Activated CD8-positive, alpha-beta T cell treated with anti-CD3 and anti-CD28 coated beads for 36 hours (primary cell): ENCODE measurements at regions of chr16 and their contacts with region 1.

Region 1: DNA sequence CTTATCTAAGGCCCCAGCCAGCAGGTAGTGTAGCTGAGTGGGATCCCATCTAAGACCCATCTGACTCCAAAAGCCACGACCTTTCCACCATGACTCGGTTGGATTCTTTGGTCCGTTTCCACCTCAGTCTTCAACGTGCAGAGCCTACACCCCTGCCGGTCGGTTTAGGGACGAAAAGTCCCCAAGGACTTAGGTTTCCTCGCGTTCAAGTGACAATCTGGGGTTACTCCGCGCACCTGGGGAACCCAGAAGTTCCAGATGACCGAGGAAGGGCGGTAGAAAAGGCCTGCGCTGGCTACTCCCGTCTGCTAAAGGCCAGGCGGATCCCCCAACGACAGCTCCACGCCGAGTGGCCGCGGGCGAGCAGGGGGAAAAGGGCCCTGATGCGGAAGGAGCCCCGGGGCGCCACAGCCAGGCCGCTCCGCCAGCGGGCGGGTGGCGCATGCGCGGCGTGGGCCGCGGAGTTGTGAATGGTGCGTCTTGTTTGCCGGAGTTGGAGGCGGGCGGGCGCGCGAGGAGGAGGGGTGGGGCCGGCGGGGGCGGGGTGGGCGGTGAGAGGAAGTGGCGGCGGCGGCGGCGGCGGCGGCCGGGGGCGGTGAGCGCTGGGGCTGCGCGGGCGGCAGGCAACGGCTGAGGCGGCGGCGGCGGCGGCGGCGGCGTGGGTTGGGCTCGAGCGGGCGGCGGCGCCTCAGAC is at the start of gene CBFB:
- DNase-seq: peak; percentile 92
- ATAC-seq: peak; percentile 92
- H3K4me3 Mint-ChIP-seq: peak within 1 kb of the TSS; percentile 86
- H3K27ac Mint-ChIP-seq: peak within 1 kb of the TSS; percentile 95
- H3K4me1 Mint-ChIP-seq: peaks cover 54% of the 10 kb centered on the region
- H3K27me3 Mint-ChIP-seq: no peaks in the 10 kb centered on the region
- CTCF ChIP-seq: peak; percentile 27
- total RNA-seq, gene CBFB: 111 to 114 TPM

Region 2: GRCh38 chr16:67043420-67043819 is 14.7 kb after region 1 on chr16:
- CTCF ChIA-PET with region 1: interaction called, 21 read pairs
- POLR2A ChIA-PET with region 1: interaction called, 14 read pairs
- intact Hi-C with region 1: no loop called
- DNase-seq: no peak
- ATAC-seq: no peak
- H3K4me3 Mint-ChIP-seq: no peak overlapping the region
- H3K27ac Mint-ChIP-seq: no peak overlapping the region
- H3K4me1 Mint-ChIP-seq: peaks cover 16% of the 10 kb centered on the region
- H3K27me3 Mint-ChIP-seq: no peaks in the 10 kb centered on the region
- CTCF ChIP-seq: no peak